Esophagus muscularis mucosa (tissue), 4 donors: ENCODE measurements at regions of chr15 and their contacts with region 1.

Region 1: GRCh38 chr15:74438721-74439316 is 5.1 kb upstream of the SEMA7A start:
- DNase-seq: no peak
- H3K4me3 ChIP-seq: no peak overlapping the region
- H3K27ac ChIP-seq: no peak overlapping the region
- H3K4me1 ChIP-seq: peaks cover 2 to 18% (median 9%) of the 10 kb centered on the region in 4 donors
- H3K27me3 ChIP-seq: no peaks in the 10 kb centered on the region
- CTCF ChIP-seq: peak; percentile 81 to 87 (median 87)
- EP300 ChIP-seq: no peak
- POLR2A ChIP-seq: no peak

Region 2: DNA sequence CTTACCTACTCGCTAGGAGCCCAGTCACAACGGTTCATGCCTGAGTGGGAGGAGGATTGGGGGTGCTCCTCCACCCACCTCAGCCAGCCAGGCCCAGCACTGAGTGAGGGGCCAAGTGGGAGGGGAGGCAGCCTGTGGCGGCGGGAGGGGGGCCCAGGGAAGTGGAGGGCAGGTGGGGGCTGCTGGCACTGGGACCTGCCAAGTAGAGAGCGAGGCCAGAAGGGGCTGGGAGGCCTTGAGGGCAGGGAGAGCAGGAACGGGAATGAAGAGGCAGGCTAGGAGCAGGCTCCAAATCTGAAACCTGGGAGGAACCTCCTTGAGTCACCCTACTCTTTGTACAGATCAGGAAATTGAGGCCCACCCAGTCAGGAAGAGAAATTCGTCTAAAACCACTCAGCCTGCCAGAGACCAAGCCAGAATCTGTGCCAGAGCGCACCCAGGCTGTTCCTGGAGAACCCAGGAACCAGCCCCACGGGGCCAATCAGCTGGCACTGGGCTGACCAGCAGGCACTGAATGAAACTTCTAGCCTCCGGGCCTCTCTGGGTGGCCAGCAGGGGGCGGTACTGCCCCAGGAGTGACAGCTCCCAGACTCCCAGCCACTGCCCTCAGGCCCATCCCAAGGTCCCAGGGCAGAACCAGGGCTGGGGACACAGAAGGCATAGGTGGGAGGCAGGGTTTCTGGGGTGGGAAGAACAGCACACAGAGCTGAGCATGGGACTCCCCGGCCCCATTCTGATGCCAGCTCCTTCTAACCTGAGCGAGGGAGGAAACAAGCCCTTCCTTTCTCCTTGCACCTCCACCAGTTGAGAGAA is 56.6 kb before region 1 on chr15:
- intact Hi-C with region 1: loop called (anchors 2 kb)
- DNase-seq: no peak
- H3K4me3 ChIP-seq: no peak overlapping the region
- H3K27ac ChIP-seq: no peak overlapping the region
- H3K4me1 ChIP-seq: peaks cover 0 to 19% (median 17%) of the 10 kb centered on the region in 4 donors
- H3K27me3 ChIP-seq: peaks cover 0 to 18% (median 0%) of the 10 kb centered on the region in 4 donors
- CTCF ChIP-seq: peak; percentile 79 to 87 (median 83)
- EP300 ChIP-seq: no peak
- POLR2A ChIP-seq: no peak

Region 3: GRCh38 chr15:74913041-74913440 is 474.2 kb after region 1 on chr15:
- intact Hi-C with region 1: no loop called
- DNase-seq: no peak
- H3K4me3 ChIP-seq: no peak overlapping the region
- H3K27ac ChIP-seq: no peak overlapping the region
- H3K4me1 ChIP-seq: no peaks in the 10 kb centered on the region
- H3K27me3 ChIP-seq: no peaks in the 10 kb centered on the region
- CTCF ChIP-seq: no peak
- EP300 ChIP-seq: no peak
- POLR2A ChIP-seq: no peak